Right ventricle myocardium inferior (tissue), 1 donor: ENCODE measurements at regions of chr1 and their contacts with region 1.

Region 1: GRCh38 chr1:13667691-13668090 is 32.3 kb upstream of the PRDM2 start:
- DNase-seq: no peak
- ATAC-seq: no peak

Region 2: DNA sequence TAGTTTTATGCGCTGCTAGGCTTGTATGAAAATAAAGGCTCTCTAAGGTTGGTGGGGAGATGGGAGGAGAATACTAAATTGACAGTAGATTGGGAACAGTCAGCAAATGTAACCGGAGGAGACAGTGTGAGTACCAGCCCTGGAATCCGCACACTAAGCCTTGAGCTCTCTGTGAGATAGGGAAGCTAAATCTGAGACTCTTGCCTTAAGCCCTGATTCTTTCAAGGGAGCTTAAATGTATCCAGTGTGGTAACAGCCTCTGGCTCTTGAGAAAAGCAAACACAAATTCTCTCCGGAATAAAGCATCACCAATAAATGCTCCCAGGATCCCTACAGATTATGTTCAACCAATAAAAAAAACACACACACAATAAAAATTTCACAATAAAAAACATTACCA is 117.0 kb before region 1 on chr1:
- intact Hi-C with region 1: no loop called
- DNase-seq: no peak
- ATAC-seq: no peak

Region 3: DNA sequence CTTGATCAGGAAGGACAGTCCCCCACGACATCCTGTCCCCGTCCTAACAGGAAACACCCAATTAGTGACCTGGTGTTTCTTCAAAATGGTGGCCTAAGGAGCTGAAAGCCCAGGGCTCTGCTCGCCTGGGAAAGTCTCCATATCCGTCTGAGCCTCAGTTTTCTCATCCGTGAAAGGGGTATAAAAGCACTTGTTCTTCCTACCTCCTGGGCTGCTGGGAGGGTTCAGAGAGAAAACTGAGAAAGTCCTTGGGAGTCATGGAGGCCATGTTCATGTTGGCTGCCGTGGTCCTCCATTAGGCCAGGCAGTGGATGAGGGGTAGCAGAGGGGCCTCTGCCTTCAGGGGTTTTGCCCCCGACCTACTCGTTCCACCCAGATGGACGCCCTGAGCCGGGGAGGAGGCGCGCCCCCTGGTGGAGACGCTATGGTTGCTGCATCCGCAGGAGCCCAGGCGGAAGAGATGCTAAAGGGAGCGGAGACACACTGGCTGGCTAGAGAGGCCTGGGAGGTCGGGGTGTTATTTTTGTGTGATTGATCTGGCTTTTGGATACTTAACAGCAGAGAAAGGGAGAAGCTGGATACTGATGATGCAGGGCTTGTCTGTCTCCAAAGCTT is 145.8 kb after region 1 on chr1:
- intact Hi-C with region 1: loop called (anchors 5 kb)
- DNase-seq: no peak
- ATAC-seq: no peak

Region 4: DNA sequence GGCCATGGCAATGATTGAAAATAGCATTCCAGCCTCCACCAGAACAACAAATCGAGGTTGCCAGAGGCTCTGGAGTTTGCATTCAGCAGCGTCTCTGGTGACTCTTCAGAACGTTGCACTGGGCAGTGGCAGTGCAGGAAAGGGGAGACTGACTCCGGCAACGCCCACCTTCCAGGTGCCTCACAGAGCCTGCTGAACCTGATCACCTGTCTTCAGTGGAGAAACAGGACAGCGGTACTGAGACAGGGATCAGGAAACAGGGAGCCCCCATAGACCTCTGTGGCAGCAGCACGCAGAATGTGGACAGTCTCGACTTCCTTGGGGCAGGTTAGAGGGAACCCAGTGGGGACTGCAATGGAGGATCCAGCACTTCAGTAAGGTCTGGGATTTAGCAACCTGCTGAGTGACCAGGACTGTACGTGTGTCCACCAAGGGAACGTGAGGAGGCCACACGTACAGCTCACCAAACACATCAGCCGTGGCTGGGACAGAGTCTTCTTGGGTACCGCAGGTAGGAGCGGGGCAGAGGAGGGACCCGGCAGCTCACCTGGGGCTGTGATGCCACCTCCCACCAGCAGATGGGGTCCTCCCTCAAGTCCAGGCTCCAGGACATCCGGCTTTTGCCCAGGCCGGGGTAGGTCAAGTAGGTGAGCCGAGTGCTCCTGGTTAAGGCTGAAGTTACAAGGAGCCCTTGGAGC is 160.9 kb after region 1 on chr1:
- intact Hi-C with region 1: loop called (anchors 5 kb)
- DNase-seq: no peak
- ATAC-seq: peak; percentile 32